CD8-positive, alpha-beta T cell (primary cell): ENCODE measurements at regions of chr14 and their contacts with region 1.

Region 1: GRCh38 chr14:50823051-50823761 is 7.8 kb downstream of the NIN start:
- DNase-seq: peak in 2 of 9 experiments; percentile 13 to 36
- ATAC-seq: no peak
- H3K4me3 ChIP-seq: peak overlapping the region; percentile 21 to 28
- H3K4me3 Mint-ChIP-seq: peak overlapping the region; percentile 79
- H3K27ac ChIP-seq: peak overlapping the region; percentile 54 to 64
- H3K27ac Mint-ChIP-seq: peak overlapping the region; percentile 98
- H3K4me1 ChIP-seq: peaks cover 93% of the 10 kb centered on the region
- H3K4me1 Mint-ChIP-seq: peaks cover 91% of the 10 kb centered on the region
- H3K27me3 ChIP-seq: no peaks in the 10 kb centered on the region
- H3K27me3 Mint-ChIP-seq: no peaks in the 10 kb centered on the region
- CTCF ChIP-seq: no peak

Region 2: GRCh38 chr14:50785457-50786063 is 37.6 kb before region 1 on chr14:
- CTCF ChIA-PET with region 1: interaction called, 40 read pairs
- POLR2A ChIA-PET with region 1: interaction called, 11 read pairs
- intact Hi-C with region 1: loop called in 1 of 2 experiments (anchors 5 kb)
- DNase-seq: peak in 2 of 9 experiments; percentile 23 to 56
- ATAC-seq: peak; percentile 52
- H3K4me3 ChIP-seq: peak overlapping the region; percentile 3 to 32
- H3K4me3 Mint-ChIP-seq: peak overlapping the region; percentile 74
- H3K27ac ChIP-seq: peak overlapping the region; percentile 32 to 58
- H3K27ac Mint-ChIP-seq: peak overlapping the region; percentile 92
- H3K4me1 ChIP-seq: peaks cover 75% of the 10 kb centered on the region
- H3K4me1 Mint-ChIP-seq: peaks cover 96% of the 10 kb centered on the region
- H3K27me3 ChIP-seq: no peaks in the 10 kb centered on the region
- H3K27me3 Mint-ChIP-seq: no peaks in the 10 kb centered on the region
- CTCF ChIP-seq: no peak

Region 3: DNA sequence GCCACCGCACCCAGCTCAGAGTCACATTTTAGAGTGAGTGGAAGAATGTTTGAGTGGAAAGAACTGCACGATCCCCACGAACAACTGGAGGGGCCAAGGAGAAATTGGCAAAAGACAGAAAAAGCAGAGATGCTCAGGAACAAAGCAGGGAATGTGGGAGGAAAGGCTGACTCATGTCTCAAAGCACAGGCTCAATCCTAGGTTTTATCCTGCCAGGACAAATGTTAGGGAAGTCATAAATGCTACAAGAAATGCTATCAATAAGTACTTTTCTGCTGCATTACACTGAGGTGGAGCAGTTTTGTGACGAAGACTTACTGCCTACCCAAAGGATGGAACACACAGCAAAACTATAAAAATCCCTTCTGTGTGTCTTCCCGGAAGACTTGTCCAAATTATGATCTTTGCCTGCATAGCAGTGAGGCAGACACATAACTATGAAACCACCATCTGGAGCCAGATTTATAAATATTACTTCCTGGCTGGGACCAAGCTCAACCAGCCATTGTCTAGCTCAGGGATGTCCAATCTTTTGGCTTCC is 19.0 kb before region 1 on chr14:
- CTCF ChIA-PET with region 1: interaction called, 3 read pairs
- POLR2A ChIA-PET with region 1: interaction called, 15 read pairs
- intact Hi-C with region 1: no loop called
- DNase-seq: no peak
- ATAC-seq: no peak
- H3K4me3 ChIP-seq: no peak overlapping the region
- H3K4me3 Mint-ChIP-seq: no peak overlapping the region
- H3K27ac ChIP-seq: no peak overlapping the region
- H3K27ac Mint-ChIP-seq: peak overlapping the region; percentile 68
- H3K4me1 ChIP-seq: peaks cover 8% of the 10 kb centered on the region
- H3K4me1 Mint-ChIP-seq: peaks cover 72% of the 10 kb centered on the region
- H3K27me3 ChIP-seq: no peaks in the 10 kb centered on the region
- H3K27me3 Mint-ChIP-seq: no peaks in the 10 kb centered on the region
- CTCF ChIP-seq: no peak